Mammary epithelial cell (primary cell): ENCODE measurements at regions of chr3 and their contacts with region 1.

Region 1: DNA sequence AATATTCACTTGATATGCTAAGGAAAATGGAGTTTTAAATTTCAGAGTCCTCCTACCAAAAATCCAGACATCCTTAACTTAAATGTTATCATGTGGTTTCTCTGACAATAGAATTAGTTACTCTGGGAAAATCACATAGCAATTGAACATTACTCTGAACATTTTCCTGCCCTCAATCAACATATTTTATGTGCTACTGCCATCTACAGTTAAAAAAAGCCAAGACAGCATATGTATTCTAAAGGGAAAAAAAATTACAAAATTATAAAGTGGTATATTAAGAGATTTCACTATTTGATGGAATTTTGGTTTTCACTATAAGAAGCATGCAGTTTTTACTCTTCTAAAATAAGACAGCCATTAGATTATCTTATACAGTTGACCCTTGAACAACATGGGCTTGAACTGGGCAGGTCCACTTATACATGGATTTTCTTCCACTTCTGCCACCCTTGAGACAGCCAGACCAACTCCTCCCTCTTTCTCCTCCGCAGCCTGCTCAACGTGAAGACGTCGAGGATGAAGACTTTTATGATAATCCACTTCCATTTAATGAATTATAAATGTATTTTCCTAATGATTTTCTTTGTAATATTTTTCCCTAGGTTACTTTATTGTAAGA is 122.3 kb downstream of the ATP1B3 start:
- DNase-seq: peak; percentile 15
- H3K4me3 ChIP-seq: no peak overlapping the region
- H3K27ac ChIP-seq: no peak overlapping the region
- H3K4me1 ChIP-seq: no peaks in the 10 kb centered on the region
- H3K27me3 ChIP-seq: no peaks in the 10 kb centered on the region
- CTCF ChIP-seq: peak; percentile 42 to 50

Region 2: GRCh38 chr3:141050576-141051442 is 948.0 kb before region 1 on chr3 and contains the start of gene SPSB4:
- CTCF ChIA-PET with region 1: interaction called, 17 read pairs
- dilution Hi-C with region 1: no loop called
- in situ Hi-C with region 1: no loop called
- intact Hi-C with region 1: no loop called
- DNase-seq: peak; percentile 43
- H3K4me3 ChIP-seq: no peak within 1 kb of the TSS
- H3K27ac ChIP-seq: no peak within 1 kb of the TSS
- H3K4me1 ChIP-seq: peaks cover 18% of the 10 kb centered on the region
- H3K27me3 ChIP-seq: peaks cover 37% of the 10 kb centered on the region
- CTCF ChIP-seq: no peak
- total RNA-seq, gene SPSB4: not detected

Region 3: DNA sequence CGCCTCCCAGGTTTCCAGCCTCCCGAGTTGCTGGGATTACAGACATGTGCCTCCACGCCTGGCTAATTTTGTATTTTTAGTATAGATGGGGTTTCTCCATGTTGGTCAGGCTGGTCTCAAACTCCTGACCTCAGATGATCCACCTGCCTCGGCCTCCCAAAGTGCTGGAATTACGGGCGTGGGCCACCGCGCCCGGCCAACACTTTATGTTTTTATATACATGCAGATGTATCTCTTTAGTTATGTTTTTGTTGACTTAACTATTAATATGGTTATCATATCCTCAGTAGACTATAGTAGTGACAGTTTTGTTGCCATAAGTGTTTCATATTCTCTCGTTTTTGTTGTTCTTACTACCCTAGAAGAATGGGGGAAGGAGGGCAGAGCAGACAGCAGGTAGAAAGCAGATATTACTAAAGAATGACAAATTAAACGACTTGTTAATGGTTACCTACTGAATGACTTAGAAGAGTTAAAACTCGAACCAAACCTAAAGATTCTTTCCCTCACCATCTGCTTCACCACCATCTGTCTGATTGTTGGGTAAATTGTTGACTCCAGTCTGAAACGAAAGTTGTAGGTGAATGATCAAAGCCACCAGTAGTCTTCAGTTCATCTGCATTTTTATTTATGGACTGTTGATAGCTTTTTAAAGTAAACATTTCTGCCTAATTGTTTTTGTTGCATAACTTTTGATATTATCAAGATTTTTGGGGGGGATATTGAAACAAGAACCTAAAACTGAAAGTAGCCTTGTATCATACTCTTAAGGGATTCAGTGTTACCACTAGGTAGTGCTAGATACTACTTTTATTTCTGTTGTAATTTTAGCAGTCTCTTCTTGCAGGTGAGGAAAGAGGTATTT is 422.7 kb before region 1 on chr3:
- CTCF ChIA-PET with region 1: no interaction called
- dilution Hi-C with region 1: no loop called
- in situ Hi-C with region 1: no loop called
- intact Hi-C with region 1: loop called (anchors 2 kb)
- DNase-seq: no peak
- H3K4me3 ChIP-seq: no peak overlapping the region
- H3K27ac ChIP-seq: no peak overlapping the region
- H3K4me1 ChIP-seq: no peaks in the 10 kb centered on the region
- H3K27me3 ChIP-seq: no peaks in the 10 kb centered on the region
- CTCF ChIP-seq: peak; percentile 41 to 47

Region 4: GRCh38 chr3:141959921-141960554 is 38.7 kb before region 1 on chr3:
- CTCF ChIA-PET with region 1: no interaction called
- dilution Hi-C with region 1: no loop called
- in situ Hi-C with region 1: no loop called
- intact Hi-C with region 1: loop called (anchors 1 kb)
- DNase-seq: peak; percentile 61
- H3K4me3 ChIP-seq: no peak overlapping the region
- H3K27ac ChIP-seq: peak overlapping the region; percentile 57
- H3K4me1 ChIP-seq: peaks cover 21% of the 10 kb centered on the region
- H3K27me3 ChIP-seq: no peaks in the 10 kb centered on the region
- CTCF ChIP-seq: no peak

Region 5: DNA sequence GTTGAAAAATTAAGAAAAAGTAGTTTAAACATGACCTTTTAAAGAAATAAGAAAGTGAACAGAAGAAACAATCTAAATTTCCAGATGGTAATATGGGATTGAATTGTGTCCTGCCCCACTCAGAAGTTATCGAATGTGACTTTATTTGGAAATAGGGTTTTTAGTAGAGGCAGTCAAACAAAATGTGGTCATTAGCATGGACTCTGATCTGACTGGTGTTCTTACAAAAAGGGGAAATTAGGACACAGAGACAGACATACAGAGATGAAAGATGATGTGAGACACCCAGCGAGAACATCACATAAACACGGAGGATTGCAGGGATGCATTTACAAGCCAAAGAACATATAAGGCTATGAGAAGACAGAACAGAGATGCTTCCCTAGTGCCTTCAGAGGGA is 375.9 kb after region 1 on chr3:
- CTCF ChIA-PET with region 1: no interaction called
- dilution Hi-C with region 1: no loop called
- in situ Hi-C with region 1: no loop called
- intact Hi-C with region 1: no loop called
- DNase-seq: no peak
- H3K4me3 ChIP-seq: no peak overlapping the region
- H3K27ac ChIP-seq: no peak overlapping the region
- H3K4me1 ChIP-seq: no peaks in the 10 kb centered on the region
- H3K27me3 ChIP-seq: no peaks in the 10 kb centered on the region
- CTCF ChIP-seq: no peak